BJ (cell line): ENCODE measurements at regions of chr19 and their contacts with region 1.

Region 1: GRCh38 chr19:45692187-45693105 is at the start of gene QPCTL:
- DNase-seq: peak; percentile 99
- H3K4me3 ChIP-seq: peak within 1 kb of the TSS; percentile 85
- H3K27me3 ChIP-seq: no peaks in the 10 kb centered on the region
- CTCF ChIP-seq: no peak
- polyA plus RNA-seq, gene QPCTL: 12.6 and 16.8 TPM in 2 replicates

Region 2: DNA sequence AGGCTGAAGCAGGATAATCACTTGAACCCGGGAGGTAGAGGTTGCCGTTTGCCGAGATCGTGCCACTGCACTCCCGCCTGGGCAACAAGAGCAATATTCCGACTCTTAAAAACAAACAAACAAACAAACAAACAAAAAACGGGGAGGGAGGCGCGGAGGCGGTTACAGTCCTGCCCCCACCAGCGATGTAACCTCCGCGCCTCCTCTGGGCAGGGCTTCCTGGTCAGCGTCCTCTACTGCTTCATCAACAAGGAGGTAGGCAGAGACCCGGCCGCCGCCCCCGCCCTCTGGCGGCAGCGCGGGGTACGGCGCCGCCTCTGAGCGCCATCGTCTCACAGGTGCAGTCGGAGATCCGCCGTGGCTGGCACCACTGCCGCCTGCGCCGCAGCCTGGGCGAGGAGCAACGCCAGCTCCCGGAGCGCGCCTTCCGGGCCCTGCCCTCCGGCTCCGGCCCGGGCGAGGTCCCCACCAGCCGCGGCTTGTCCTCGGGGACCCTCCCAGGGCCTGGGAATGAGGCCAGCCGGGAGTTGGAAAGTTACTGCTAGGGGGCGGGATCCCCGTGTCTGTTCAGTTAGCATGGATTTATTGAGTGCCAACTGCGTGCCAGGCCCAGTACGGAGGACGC is 10.9 kb before region 1 on chr19:
- CTCF ChIA-PET with region 1: interaction called, 52 read pairs
- POLR2A ChIA-PET with region 1: no interaction called
- DNase-seq: no peak
- H3K4me3 ChIP-seq: peak overlapping the region; percentile 39
- H3K27me3 ChIP-seq: no peaks in the 10 kb centered on the region
- CTCF ChIP-seq: peak; percentile 91

Region 3: DNA sequence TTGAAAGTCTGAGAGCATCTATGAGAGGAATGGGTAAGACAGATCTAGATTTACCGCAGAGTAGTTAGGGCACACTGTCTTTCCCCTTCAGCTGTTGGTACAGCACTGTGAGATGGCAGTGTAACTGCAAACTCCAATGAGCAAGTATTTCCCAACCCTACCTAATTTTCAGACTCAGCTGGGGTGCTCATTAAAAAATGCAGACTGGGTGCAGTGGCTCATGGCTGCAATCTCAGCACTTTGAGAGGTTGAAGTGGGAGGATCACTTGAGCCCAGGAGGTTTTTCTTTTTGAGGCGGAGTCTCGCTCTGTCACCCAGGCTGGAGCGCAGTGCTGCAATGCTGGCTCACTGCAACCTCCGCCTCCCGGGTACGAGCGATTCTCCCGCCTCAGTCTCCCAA is 12.7 kb after region 1 on chr19:
- CTCF ChIA-PET with region 1: interaction called, 49 read pairs
- POLR2A ChIA-PET with region 1: interaction called, 3 read pairs
- DNase-seq: no peak
- H3K4me3 ChIP-seq: no peak overlapping the region
- H3K27me3 ChIP-seq: no peaks in the 10 kb centered on the region
- CTCF ChIP-seq: no peak

Region 4: GRCh38 chr19:45717166-45717982 is 24.9 kb after region 1 on chr19:
- CTCF ChIA-PET with region 1: interaction called, 25 read pairs
- POLR2A ChIA-PET with region 1: no interaction called
- DNase-seq: peak; percentile 94
- H3K4me3 ChIP-seq: peak overlapping the region; percentile 48
- H3K27me3 ChIP-seq: no peaks in the 10 kb centered on the region
- CTCF ChIP-seq: peak; percentile 49

Region 5: GRCh38 chr19:45770192-45771101 is 78.0 kb after region 1 on chr19:
- CTCF ChIA-PET with region 1: interaction called, 37 read pairs
- POLR2A ChIA-PET with region 1: interaction called, 3 read pairs
- DNase-seq: peak; percentile 83
- H3K4me3 ChIP-seq: peak overlapping the region; percentile 42
- H3K27me3 ChIP-seq: no peaks in the 10 kb centered on the region
- CTCF ChIP-seq: peak; percentile 91

Region 6: DNA sequence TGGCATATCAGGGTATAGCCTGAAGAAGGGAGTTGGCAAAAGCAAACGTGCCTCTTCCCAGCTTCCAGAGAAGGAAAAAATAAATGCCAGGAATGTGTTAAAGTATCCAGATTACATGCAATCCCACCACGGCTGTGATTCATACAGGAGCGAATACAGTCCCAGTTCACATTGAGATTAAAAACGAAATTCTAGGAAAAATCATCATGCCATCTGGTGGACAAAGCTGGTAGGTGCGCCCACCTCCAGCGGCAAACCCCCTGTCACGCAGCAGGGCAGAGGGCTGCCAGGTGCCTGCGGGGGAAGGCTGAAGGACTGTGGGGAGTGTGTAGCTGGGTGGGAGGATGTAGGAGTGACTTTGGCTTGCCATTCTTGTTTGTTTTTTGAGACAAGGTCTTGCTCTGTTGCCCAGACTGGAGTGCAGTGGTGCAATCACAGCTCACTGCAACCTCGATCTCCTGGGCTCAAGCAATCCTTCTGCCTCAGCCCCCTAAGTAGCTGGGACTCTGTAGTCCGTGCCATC is 106.6 kb after region 1 on chr19:
- CTCF ChIA-PET with region 1: interaction called, 13 read pairs
- POLR2A ChIA-PET with region 1: no interaction called
- DNase-seq: no peak
- H3K4me3 ChIP-seq: no peak overlapping the region
- H3K27me3 ChIP-seq: no peaks in the 10 kb centered on the region
- CTCF ChIP-seq: peak; percentile 81

Region 7: GRCh38 chr19:45886427-45887199 is 194.2 kb after region 1 on chr19:
- CTCF ChIA-PET with region 1: no interaction called
- POLR2A ChIA-PET with region 1: interaction called, 28 read pairs
- DNase-seq: peak; percentile 49
- H3K4me3 ChIP-seq: peak overlapping the region; percentile 79
- H3K27me3 ChIP-seq: no peaks in the 10 kb centered on the region
- CTCF ChIP-seq: no peak